HAP-1 (cell line): ENCODE measurements at regions of chrX and their contacts with region 1.

Region 1: GRCh38 chrX:13515211-13515930 is 54.0 kb upstream of the EGFL6 start:
- DNase-seq: no peak
- H3K4me3 ChIP-seq: no peak overlapping the region
- H3K4me1 ChIP-seq: no peaks in the 10 kb centered on the region
- H3K27me3 ChIP-seq: no peaks in the 10 kb centered on the region

Region 2: GRCh38 chrX:13087322-13088155 is 427.8 kb before region 1 on chrX:
- in situ Hi-C with region 1: no loop called
- DNase-seq: no peak
- H3K4me3 ChIP-seq: no peak overlapping the region
- H3K4me1 ChIP-seq: peaks cover 13% of the 10 kb centered on the region
- H3K27me3 ChIP-seq: no peaks in the 10 kb centered on the region

Region 3: GRCh38 chrX:13622401-13622957 is 107.1 kb after region 1 on chrX:
- in situ Hi-C with region 1: no loop called
- DNase-seq: no peak
- H3K4me3 ChIP-seq: no peak overlapping the region
- H3K4me1 ChIP-seq: peaks cover 12% of the 10 kb centered on the region
- H3K27me3 ChIP-seq: 0 out of 2 replicates have a peak, but pooled peaks cover 2% of the 10 kb centered on the region

Region 4: GRCh38 chrX:13638826-13639225 is 123.5 kb after region 1 on chrX:
- in situ Hi-C with region 1: loop called (anchors 5 kb)
- DNase-seq: peak; percentile 25 to 47
- H3K4me3 ChIP-seq: no peak overlapping the region
- H3K4me1 ChIP-seq: peaks cover 5% of the 10 kb centered on the region; the same call in 1 of the 2 replicates
- H3K27me3 ChIP-seq: no peaks in the 10 kb centered on the region